GM10248 (cell line): ENCODE measurements at regions of chr2 and their contacts with region 1.

Region 1: GRCh38 chr2:219261024-219261855 is 7.5 kb upstream of the TUBA4A start:
- DNase-seq: no peak
- CTCF ChIP-seq: no peak

Region 2: DNA sequence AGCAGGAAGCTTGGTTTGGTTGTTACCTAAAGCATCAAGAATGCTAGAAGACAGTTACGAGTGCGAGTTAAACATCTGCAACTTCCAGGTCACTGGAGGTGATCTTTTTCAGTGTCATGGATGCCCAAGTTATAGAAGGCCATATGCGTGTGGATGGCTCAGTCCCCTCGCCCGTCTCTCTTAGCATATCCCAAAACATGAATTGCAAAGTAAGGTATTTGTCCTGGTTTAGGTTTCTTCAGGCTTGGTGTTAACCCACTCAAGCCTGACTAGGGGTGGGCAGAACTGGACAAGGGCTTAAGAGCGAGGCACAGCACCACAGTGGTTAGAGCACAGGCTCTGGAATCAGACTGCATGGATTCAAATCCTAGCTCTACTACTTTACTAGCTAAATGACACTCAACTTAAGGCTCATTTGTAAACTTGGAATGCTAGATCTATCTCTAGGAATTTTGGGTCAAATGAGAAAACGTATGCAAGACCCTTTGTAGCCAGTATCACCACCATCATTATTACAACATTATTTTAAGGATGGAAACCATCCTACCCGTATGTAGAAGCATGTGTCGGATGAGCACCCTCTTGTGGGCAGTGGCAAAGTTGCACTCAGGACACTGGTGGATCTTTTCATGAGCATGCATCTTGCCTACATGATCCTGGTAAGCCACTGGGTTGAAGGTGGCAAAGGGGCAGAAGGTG is 613.0 kb before region 1 on chr2:
- CTCF ChIA-PET with region 1: no interaction called
- POLR2A ChIA-PET with region 1: no interaction called
- DNase-seq: peak; percentile 69
- CTCF ChIP-seq: peak; percentile 79

Region 3: DNA sequence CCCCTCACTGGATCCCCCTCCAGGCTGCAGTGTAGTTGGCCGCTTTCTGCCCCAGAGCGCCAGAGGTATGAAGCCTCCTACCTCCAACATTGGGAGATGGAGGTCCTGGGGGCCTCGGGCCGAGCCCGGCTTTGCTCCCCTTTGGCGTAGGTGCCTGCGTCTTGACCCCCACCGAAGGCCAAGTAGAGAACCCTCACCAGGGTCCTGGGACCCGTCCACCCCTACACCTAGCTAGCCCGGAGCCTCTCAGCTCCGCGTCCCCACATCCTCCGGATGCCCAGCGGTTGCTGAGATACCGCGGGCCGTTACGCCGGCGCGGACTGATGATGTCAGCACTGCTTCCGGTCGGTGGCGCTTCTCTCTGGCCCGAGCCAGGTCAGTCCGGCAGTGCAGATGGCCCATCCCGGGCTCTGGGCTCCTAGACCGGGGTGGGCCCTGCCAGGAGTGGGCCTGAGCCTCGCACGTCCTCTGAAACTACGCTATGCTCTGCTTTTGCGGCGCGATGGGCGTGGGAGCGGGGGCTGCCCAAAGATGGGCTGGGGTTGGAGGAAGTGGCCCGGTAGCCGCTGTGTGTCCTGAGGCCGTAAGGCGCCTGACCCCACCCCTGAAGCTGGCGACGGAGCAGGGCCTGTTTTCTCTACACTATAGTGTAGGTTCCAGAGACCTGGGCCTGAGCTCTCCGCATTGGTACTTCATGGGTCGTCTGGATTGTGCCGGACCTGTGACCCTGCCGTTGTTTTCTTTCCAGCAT is 15.9 kb before region 1 on chr2 and contains the starts of genes GLB1L and STK16:
- CTCF ChIA-PET with region 1: interaction called, 14 read pairs
- POLR2A ChIA-PET with region 1: interaction called, 6 read pairs
- DNase-seq: peak; percentile 96
- CTCF ChIP-seq: no peak